HEK293 (cell line): ENCODE measurements at regions of chr17 and their contacts with region 1.

Region 1: GRCh38 chr17:59846394-59847165 is 46.2 kb downstream of the TUBD1 start:
- H3K4me3 ChIP-seq: no peak overlapping the region
- H3K27ac ChIP-seq: peak overlapping the region; percentile 57
- H3K4me1 ChIP-seq: peaks cover 25% of the 10 kb centered on the region
- CTCF ChIP-seq: no peak

Region 2: DNA sequence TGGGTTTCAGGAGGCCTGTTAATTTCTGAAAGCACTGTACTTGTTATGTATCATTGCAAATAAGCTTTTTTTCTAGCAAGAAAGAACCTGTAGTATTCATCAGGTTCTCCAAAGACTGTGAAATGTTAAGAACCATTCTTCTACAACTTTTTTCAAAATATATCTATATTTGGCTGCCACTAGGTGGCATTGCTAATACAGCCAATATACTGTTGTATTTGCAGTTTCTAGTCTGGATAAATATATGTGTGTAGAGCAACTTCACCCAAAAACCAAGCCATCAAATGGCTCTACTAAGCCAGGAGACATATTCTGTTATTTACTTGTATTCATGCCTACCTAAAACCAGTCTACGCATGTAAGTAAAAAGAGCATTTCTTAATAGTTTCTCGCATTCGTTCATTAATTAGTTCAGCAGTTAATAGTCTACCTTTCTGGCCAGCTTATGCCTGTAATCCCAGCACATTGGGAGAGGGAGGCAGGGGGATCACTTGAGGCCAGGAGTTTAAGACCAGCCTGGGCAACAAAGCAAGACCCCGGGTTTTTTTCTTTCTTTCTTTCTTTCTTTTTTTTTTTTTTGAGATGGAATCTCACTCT is 99.6 kb before region 1 on chr17:
- CTCF ChIA-PET with region 1: interaction called, 73 read pairs
- POLR2A ChIA-PET with region 1: interaction called, 4 read pairs
- H3K4me3 ChIP-seq: no peak overlapping the region
- H3K27ac ChIP-seq: no peak overlapping the region
- H3K4me1 ChIP-seq: no peaks in the 10 kb centered on the region
- CTCF ChIP-seq: no peak

Region 3: DNA sequence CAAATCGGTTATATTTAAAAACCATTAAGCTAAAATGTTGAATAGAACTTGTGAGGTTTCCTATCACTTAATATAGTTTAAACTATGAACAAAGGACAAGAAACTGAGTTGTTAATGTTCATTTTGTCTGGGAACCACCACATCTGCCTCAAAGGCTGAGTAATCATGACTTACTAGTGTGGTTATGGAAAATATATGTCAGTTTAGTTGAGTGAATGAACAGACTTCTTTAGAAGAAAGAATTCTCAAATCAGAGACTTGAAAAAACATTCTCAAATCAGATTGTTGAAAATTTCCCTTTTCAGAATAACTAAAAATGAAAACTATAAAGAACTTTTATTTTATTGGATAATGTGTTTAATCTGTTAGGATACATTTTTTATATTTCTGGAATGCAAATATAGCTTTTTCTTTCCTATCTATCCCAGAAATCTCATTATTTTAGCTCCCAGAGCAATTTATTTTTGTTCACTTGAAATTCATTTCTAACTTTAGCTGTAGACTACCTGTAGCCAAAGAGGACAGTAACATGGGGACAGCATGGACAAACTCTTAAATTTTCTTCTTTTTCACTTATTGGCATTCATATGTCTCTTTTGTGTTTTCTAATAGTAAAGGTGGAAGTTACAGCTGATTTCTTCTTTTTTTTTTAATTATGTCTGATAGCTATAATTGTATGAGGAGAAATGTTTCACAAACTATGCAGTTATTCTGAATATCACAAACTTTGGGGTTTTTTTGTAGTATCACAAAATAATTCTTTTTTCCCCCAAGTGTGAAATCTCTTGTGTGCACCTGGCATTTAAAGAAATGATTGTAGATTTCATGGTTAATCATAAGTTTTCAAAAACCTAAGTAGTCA is 83.8 kb before region 1 on chr17:
- CTCF ChIA-PET with region 1: no interaction called
- POLR2A ChIA-PET with region 1: interaction called, 16 read pairs
- H3K4me3 ChIP-seq: no peak overlapping the region
- H3K27ac ChIP-seq: no peak overlapping the region
- H3K4me1 ChIP-seq: peaks cover 9% of the 10 kb centered on the region; the same call in 1 of the 2 replicates
- CTCF ChIP-seq: no peak

Region 4: GRCh38 chr17:59829217-59830006 is 17.2 kb before region 1 on chr17:
- CTCF ChIA-PET with region 1: interaction called, 6 read pairs
- POLR2A ChIA-PET with region 1: interaction called, 23 read pairs
- H3K4me3 ChIP-seq: peak overlapping the region; percentile 4; the same call in 1 of the 2 replicates
- H3K27ac ChIP-seq: peak overlapping the region; percentile 95
- H3K4me1 ChIP-seq: peaks cover 39% of the 10 kb centered on the region
- CTCF ChIP-seq: no peak

Region 5: DNA sequence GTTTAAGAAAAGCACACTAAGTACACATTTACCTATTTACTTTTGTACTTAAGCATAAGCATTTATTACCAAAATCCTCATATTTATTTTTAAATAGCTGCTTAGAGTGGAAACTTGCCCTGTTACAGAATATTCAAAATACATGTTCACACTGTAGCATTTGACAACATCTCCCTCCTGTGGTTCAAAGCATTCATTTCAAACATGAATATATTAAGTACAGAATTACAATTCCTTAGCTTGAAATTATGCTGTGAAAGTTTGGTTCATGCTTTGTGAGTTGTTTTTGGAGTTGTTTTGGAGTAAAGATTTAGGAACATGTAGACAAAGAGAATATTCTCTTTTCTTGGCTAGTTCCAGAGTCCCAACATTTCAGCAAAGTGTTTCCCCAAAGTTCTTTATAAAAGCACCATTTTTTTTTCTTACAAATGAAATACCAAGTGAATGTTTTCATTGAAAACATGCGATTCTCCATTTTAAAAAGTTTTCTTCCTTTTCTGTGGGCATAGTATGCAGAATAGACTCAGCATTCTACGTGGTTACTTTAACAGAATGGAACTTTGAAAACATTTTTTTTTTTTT is 13.0 kb after region 1 on chr17:
- CTCF ChIA-PET with region 1: no interaction called
- POLR2A ChIA-PET with region 1: interaction called, 16 read pairs
- H3K4me3 ChIP-seq: no peak overlapping the region
- H3K27ac ChIP-seq: no peak overlapping the region
- H3K4me1 ChIP-seq: no peaks in the 10 kb centered on the region
- CTCF ChIP-seq: no peak